ENCODE measurements at regions of chr3 and their contacts with region 1.

Region 1: GRCh38 chr3:30188713-30189112 is 417.7 kb upstream of the TGFBR2 start:
- DNase-seq: no peak
- ATAC-seq: peak; percentile 30 to 85

Region 2: DNA sequence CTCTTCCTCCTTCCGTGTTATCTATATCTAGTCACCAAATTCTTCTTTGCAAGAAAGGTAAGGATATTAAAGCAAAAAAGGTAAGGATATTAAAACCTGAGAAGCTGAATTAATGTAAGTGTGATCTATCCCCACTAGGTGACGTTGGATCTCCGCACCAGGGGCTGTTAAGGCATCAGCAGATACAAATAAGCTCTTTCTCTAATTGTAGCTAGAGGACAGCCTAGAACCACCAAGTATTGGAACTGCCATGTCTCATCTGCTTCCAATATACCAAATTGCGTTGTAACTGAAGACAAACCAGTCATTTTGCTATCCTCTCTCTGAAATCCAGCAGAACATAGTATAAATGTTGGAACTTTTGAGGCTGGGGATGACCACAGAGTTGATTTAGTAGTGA is 53.5 kb before region 1 on chr3:
- intact Hi-C with region 1: loop called in 1 of 2 experiments (anchors 10 kb)
- DNase-seq: no peak
- ATAC-seq: no peak

Measured in left cardiac atrium (tissue), 4 donors.